ENCODE measurements at regions of chr7 and their contacts with region 1.

Region 1: GRCh38 chr7:14698239-14698638 is 204.3 kb downstream of the DGKB start:
- DNase-seq: no peak
- ATAC-seq: peak; percentile 58; the same call in 2 of the 3 replicates
- H3K4me3 ChIP-seq: no peak overlapping the region
- H3K27ac ChIP-seq: no peak overlapping the region
- H3K4me1 ChIP-seq: no peaks in the 10 kb centered on the region
- H3K27me3 ChIP-seq: no peaks in the 10 kb centered on the region
- CTCF ChIP-seq: no peak; a peak in 1 of 6 replicates
- EP300 ChIP-seq: no peak
- POLR2A ChIP-seq: no peak
- RAD21 ChIP-seq: peak; percentile 22; the same call in 1 of the 2 replicates

Region 2: GRCh38 chr7:14717816-14718215 is 19.6 kb after region 1 on chr7:
- CTCF ChIA-PET with region 1: interaction called, 26 read pairs
- POLR2A ChIA-PET with region 1: no interaction called
- RAD21 ChIA-PET with region 1: interaction called, 5 read pairs
- SMC1A ChIA-PET with region 1: interaction called, 16 read pairs
- in situ Hi-C with region 1: no loop called
- intact Hi-C with region 1: no loop called
- DNase-seq: no peak
- ATAC-seq: no peak
- H3K4me3 ChIP-seq: no peak overlapping the region
- H3K27ac ChIP-seq: no peak overlapping the region
- H3K4me1 ChIP-seq: no peaks in the 10 kb centered on the region
- H3K27me3 ChIP-seq: peaks cover 0 to 3% of the 10 kb centered on the region in 2 experiments; a peak in 1 of 4 replicates
- CTCF ChIP-seq: peak in 2 of 3 experiments; percentile 7 to 12; a peak in 3 of 6 replicates
- EP300 ChIP-seq: no peak
- POLR2A ChIP-seq: no peak
- RAD21 ChIP-seq: peak; percentile 49

Region 3: DNA sequence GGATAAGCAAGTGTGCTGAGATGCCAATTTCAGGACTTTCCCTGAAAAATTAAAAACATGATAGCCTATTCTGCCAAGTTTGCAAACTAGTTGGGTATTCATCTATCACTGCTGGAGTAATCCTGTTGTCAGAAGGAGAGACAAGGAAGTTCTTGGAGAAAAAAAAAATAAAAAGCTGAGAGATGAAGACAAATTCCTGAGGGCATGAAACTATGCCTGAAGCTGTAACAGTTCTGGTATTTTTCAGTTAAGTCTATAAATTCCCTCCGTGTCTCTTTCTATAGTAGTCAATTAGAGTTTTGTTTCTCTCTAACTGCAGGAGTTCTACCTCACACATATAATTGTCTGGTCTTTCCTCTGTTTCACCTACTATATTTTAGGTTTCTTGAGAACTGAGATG is 108.7 kb after region 1 on chr7:
- CTCF ChIA-PET with region 1: no interaction called
- POLR2A ChIA-PET with region 1: no interaction called
- RAD21 ChIA-PET with region 1: no interaction called
- SMC1A ChIA-PET with region 1: no interaction called
- in situ Hi-C with region 1: no loop called
- intact Hi-C with region 1: no loop called
- DNase-seq: no peak
- ATAC-seq: no peak
- H3K4me3 ChIP-seq: no peak overlapping the region
- H3K27ac ChIP-seq: no peak overlapping the region
- H3K4me1 ChIP-seq: no peaks in the 10 kb centered on the region
- H3K27me3 ChIP-seq: no peaks in the 10 kb centered on the region
- CTCF ChIP-seq: no peak
- EP300 ChIP-seq: no peak
- POLR2A ChIP-seq: no peak
- RAD21 ChIP-seq: no peak

Region 4: DNA sequence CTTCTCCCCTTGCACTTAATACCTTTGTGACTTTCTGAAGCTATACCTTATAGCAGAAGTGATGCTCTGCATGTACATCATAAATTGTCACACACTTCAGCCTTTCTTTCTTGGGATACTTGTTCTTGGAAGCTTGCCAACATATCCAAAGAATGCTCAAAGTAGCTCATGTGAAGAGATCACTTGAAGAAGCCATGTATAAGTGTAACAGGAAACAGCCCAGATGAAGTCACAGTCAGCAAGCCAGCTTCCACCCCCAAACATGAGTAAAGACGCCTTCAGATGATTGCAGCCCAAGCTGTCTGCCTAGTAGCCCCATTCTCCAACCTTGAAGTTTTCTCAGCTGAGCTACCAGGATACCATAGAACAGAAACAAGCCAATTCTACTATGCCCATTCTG is 153.4 kb after region 1 on chr7:
- CTCF ChIA-PET with region 1: no interaction called
- POLR2A ChIA-PET with region 1: no interaction called
- RAD21 ChIA-PET with region 1: no interaction called
- SMC1A ChIA-PET with region 1: no interaction called
- in situ Hi-C with region 1: no loop called
- intact Hi-C with region 1: no loop called
- DNase-seq: no peak
- ATAC-seq: no peak
- H3K4me3 ChIP-seq: no peak overlapping the region
- H3K27ac ChIP-seq: no peak overlapping the region
- H3K4me1 ChIP-seq: no peaks in the 10 kb centered on the region
- H3K27me3 ChIP-seq: no peaks in the 10 kb centered on the region
- CTCF ChIP-seq: no peak
- EP300 ChIP-seq: no peak
- POLR2A ChIP-seq: no peak
- RAD21 ChIP-seq: no peak